ENCODE measurements at regions of chr22 and their contacts with region 1.

Region 1: GRCh38 chr22:32103658-32104315 is 55.3 kb downstream of the C22orf42 start:
- DNase-seq: peak in 5 of 9 donors; percentile 11 to 34 (median 23)
- ATAC-seq: no peak
- H3K4me3 ChIP-seq: no peak overlapping the region
- H3K4me3 Mint-ChIP-seq: no peak overlapping the region
- H3K27ac ChIP-seq: no peak overlapping the region
- H3K27ac Mint-ChIP-seq: no peak overlapping the region
- H3K4me1 ChIP-seq: no peaks in the 10 kb centered on the region
- H3K4me1 Mint-ChIP-seq: no peaks in the 10 kb centered on the region
- H3K27me3 ChIP-seq: no peaks in the 10 kb centered on the region
- H3K27me3 Mint-ChIP-seq: peaks cover 12 to 44% (median 28%) of the 10 kb centered on the region in 5 donors

Region 2: DNA sequence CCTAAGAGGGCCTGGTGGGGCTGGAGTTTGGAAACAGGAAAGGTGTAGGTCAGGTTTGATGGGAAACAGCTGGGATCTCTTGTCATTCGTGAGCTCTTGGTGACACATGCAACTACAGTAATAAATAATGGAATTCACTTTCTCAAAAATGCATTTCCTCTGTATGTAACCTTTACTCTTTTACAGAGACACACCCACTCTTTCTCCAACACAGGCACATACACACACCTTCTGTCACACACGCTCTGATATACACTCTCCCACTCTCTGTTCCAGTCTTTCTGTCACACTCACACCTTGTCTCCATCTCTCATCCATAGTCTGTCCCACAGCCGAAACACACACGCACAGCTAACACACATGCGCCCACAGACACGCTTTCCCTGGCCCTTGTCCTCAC is 61.9 kb after region 1 on chr22:
- CTCF ChIA-PET with region 1: no interaction called
- POLR2A ChIA-PET with region 1: no interaction called
- intact Hi-C with region 1: no loop called
- DNase-seq: no peak
- ATAC-seq: no peak
- H3K4me3 ChIP-seq: no peak overlapping the region
- H3K4me3 Mint-ChIP-seq: no peak overlapping the region
- H3K27ac ChIP-seq: no peak overlapping the region
- H3K27ac Mint-ChIP-seq: peak overlapping the region in 1 of 9 donors; percentile 28
- H3K4me1 ChIP-seq: no peaks in the 10 kb centered on the region
- H3K4me1 Mint-ChIP-seq: peaks cover 0 to 10% (median 4%) of the 10 kb centered on the region in 7 donors
- H3K27me3 ChIP-seq: no peaks in the 10 kb centered on the region
- H3K27me3 Mint-ChIP-seq: peaks cover 4 to 25% (median 6%) of the 10 kb centered on the region in 5 donors

Region 3: DNA sequence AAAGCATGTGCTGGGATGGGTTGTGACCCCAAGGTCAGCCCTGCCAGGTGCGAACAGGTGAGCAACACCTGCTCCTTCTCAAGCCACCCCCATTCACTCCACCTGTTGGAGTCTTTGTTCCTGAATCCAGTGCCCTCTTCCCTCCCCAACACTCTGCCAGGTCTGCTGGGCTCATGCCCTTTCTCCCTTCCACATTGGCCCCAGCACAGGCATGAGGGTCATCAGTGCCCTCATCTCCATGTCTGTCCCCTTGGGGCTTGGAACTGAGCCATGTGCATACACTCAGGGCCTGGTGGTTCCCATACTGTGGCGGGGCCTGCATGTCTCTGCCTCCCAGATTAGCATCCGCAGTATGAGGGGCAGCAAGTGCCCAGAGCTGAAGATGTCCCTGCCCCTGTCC is 82.0 kb after region 1 on chr22:
- CTCF ChIA-PET with region 1: no interaction called
- POLR2A ChIA-PET with region 1: no interaction called
- intact Hi-C with region 1: no loop called
- DNase-seq: no peak
- ATAC-seq: no peak
- H3K4me3 ChIP-seq: no peak overlapping the region
- H3K4me3 Mint-ChIP-seq: no peak overlapping the region
- H3K27ac ChIP-seq: no peak overlapping the region
- H3K27ac Mint-ChIP-seq: no peak overlapping the region
- H3K4me1 ChIP-seq: no peaks in the 10 kb centered on the region
- H3K4me1 Mint-ChIP-seq: no peaks in the 10 kb centered on the region
- H3K27me3 ChIP-seq: no peaks in the 10 kb centered on the region
- H3K27me3 Mint-ChIP-seq: peaks cover 0 to 20% (median 9%) of the 10 kb centered on the region in 5 donors

Region 4: DNA sequence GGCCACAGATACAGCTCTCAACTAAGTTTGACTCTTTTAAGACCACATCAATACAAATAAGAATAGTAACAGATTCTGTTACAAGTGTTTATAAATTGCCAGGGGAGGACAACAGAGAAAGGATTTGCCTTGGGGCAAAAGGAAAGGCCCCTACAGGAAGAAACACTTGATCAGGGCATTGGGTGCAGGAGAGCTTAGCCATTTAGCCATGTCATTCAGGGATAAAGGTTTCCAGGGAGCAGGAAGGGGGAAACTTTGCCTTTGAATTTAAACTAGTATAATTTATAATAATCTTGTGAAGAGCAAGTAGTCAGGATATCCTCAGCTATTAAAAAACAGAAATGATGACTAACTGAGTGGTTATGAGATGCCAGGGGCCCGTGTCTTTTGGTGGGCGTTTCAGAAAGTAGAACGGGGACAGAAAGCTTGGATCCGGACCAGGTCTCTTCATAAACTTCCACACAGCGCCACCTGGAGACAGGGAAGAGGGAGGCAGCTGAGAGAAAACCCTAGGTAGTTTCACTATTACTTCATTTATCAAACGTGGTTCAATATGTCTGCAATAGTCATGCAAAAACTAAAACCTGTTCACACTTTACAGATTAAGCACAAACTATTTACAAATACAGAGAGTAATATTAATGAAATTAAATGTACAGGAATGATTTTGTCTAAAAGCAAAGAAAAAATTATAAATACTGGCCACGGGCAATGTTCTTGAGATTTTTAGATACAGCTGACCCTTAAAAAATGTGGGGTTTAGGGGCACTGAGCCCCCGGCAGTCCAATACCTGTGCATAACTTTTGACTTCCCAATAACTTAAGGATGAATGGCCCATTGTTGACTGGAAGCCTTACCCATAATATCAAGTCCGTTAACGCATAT is 162.3 kb after region 1 on chr22:
- CTCF ChIA-PET with region 1: interaction called, 22 read pairs
- POLR2A ChIA-PET with region 1: no interaction called
- intact Hi-C with region 1: loop called (anchors 1 kb)
- DNase-seq: peak; percentile 11 to 66 (median 56)
- ATAC-seq: peak; percentile 75
- H3K4me3 ChIP-seq: no peak overlapping the region
- H3K4me3 Mint-ChIP-seq: peak overlapping the region in 6 of 10 donors; percentile 8 to 55 (median 30)
- H3K27ac ChIP-seq: no peak overlapping the region
- H3K27ac Mint-ChIP-seq: peak overlapping the region in 1 of 9 donors; percentile 28
- H3K4me1 ChIP-seq: no peaks in the 10 kb centered on the region
- H3K4me1 Mint-ChIP-seq: peaks cover 0 to 11% (median 7%) of the 10 kb centered on the region in 7 donors
- H3K27me3 ChIP-seq: no peaks in the 10 kb centered on the region
- H3K27me3 Mint-ChIP-seq: peaks cover 2 to 8% (median 6%) of the 10 kb centered on the region in 5 donors

Region 5: DNA sequence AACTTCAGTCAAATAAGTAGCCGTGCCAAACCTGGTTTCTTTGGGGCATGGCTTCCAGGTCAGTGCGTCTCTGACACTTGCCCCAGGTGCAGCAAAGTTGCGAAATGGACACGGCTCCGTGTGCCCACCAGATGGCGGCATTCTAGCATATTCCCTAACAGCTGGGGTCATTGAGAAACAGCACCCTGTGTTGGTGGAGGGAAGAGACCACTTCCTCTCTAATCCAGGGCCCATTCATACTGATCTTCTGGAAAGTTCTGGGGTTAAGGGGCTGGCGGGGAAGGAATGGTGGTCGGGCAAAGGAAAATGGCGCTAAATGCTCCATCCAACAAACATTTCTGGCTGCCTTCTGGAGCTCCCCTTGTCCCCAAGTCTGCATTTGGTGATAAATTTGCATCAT is 556.5 kb after region 1 on chr22:
- CTCF ChIA-PET with region 1: no interaction called
- POLR2A ChIA-PET with region 1: no interaction called
- intact Hi-C with region 1: loop called in 1 of 2 experiments (anchors 10 kb)
- DNase-seq: peak; percentile 16 to 62 (median 46)
- ATAC-seq: peak; percentile 54
- H3K4me3 ChIP-seq: no peak overlapping the region
- H3K4me3 Mint-ChIP-seq: no peak overlapping the region
- H3K27ac ChIP-seq: no peak overlapping the region
- H3K27ac Mint-ChIP-seq: no peak overlapping the region
- H3K4me1 ChIP-seq: no peaks in the 10 kb centered on the region
- H3K4me1 Mint-ChIP-seq: peaks cover 0 to 5% (median 0%) of the 10 kb centered on the region in 7 donors
- H3K27me3 ChIP-seq: no peaks in the 10 kb centered on the region
- H3K27me3 Mint-ChIP-seq: peaks cover 0 to 15% (median 6%) of the 10 kb centered on the region in 5 donors